HCT116 (cell line): ENCODE measurements at regions of chr1 and their contacts with region 1.

Region 1: DNA sequence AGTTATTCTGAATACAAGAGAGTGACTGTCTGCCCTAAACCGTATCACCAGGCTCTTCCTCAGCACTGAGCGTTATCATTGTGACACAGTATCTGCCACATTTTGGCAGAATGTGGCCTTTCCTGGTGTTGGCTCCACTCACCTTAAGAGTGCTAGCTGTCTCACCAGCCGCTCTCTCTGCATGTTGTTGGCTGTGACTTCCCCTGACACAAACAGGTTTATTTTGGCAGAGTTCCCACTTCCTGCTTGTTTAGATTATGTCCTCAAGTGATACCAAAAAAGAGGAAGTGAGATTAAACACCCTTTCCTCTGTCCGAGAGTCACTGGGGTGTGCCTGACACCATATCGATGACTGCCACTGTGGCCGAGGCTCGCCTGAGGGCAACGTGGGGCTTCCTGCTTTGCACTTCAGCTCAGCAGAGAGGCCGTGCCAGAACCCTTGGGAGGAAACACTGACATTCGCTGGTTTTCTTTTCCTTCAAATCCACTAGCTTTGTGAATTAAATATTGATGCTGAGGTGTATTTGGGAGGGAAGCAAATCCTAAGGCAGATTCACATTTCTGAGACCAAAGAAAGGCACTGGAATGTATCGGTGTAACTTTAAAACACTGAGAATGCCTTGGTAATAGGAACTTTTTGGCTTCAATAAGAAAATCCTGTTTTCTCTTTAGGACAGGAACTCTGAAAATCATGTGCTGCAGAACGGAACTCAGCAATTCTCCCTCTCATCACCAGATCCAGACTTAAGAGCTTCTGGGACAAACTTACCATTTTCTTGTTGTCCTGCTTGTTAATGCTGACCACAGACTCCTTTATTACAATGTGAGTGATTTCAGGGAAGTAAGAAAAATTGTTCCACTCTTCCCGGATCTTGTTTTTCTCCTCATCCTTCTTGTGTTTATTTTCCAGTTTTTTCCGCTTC is 102.1 kb downstream of the JAK1 start:
- DNase-seq: peak; percentile 33
- ATAC-seq: peak; percentile 60
- H3K4me3 ChIP-seq: no peak overlapping the region
- H3K27ac ChIP-seq: no peak overlapping the region
- H3K4me1 ChIP-seq: peaks cover 7 to 10% of the 10 kb centered on the region in 2 experiments; a peak in 3 of 4 replicates
- H3K27me3 ChIP-seq: no peaks in the 10 kb centered on the region
- CTCF ChIP-seq: no peak
- POLR2A ChIP-seq: no peak
- RAD21 ChIP-seq: no peak; the same call in 1 of the 2 replicates

Region 2: GRCh38 chr1:64851664-64852063 is 12.6 kb before region 1 on chr1:
- CTCF ChIA-PET with region 1: no interaction called
- POLR2A ChIA-PET with region 1: no interaction called
- RAD21 ChIA-PET with region 1: no interaction called
- intact Hi-C with region 1: no loop called
- DNase-seq: no peak
- ATAC-seq: no peak
- H3K4me3 ChIP-seq: no peak overlapping the region
- H3K27ac ChIP-seq: no peak overlapping the region
- H3K4me1 ChIP-seq: no peaks in the 10 kb centered on the region
- H3K27me3 ChIP-seq: no peaks in the 10 kb centered on the region
- CTCF ChIP-seq: no peak
- POLR2A ChIP-seq: no peak
- RAD21 ChIP-seq: no peak

Region 3: GRCh38 chr1:64966158-64966971 is 102.1 kb after region 1 on chr1 and contains the start of gene JAK1:
- CTCF ChIA-PET with region 1: no interaction called
- POLR2A ChIA-PET with region 1: no interaction called
- RAD21 ChIA-PET with region 1: interaction called in 1 of 2 experiments, 4 read pairs
- intact Hi-C with region 1: loop called (anchors 10 kb)
- DNase-seq: no peak
- ATAC-seq: peak; percentile 91
- H3K4me3 ChIP-seq: peak within 1 kb of the TSS; percentile 82 to 90
- H3K27ac ChIP-seq: peak within 1 kb of the TSS; percentile 82
- H3K4me1 ChIP-seq: peaks cover 8 to 18% of the 10 kb centered on the region in 2 experiments; a peak in 3 of 4 replicates
- H3K27me3 ChIP-seq: no peaks in the 10 kb centered on the region
- CTCF ChIP-seq: no peak
- POLR2A ChIP-seq: peak; percentile 84
- RAD21 ChIP-seq: no peak
- total RNA-seq, gene JAK1: 53.2 TPM

Region 4: GRCh38 chr1:65020774-65021173 is 156.5 kb after region 1 on chr1:
- CTCF ChIA-PET with region 1: no interaction called
- POLR2A ChIA-PET with region 1: no interaction called
- RAD21 ChIA-PET with region 1: no interaction called
- intact Hi-C with region 1: loop called (anchors 5 kb)
- DNase-seq: no peak
- ATAC-seq: peak; percentile 86
- H3K4me3 ChIP-seq: no peak overlapping the region
- H3K27ac ChIP-seq: no peak overlapping the region
- H3K4me1 ChIP-seq: no peaks in the 10 kb centered on the region
- H3K27me3 ChIP-seq: no peaks in the 10 kb centered on the region
- CTCF ChIP-seq: peak; percentile 21 to 51 (median 49); a peak in 5 of 6 replicates
- POLR2A ChIP-seq: no peak
- RAD21 ChIP-seq: peak; percentile 52; the same call in 1 of the 2 replicates